CD8-positive, alpha-beta T cell (primary cell): ENCODE measurements at regions of chr12 and their contacts with region 1.

Region 1: GRCh38 chr12:12562585-12563261 is at the start of gene DUSP16:
- DNase-seq: peak; percentile 50 to 95 (median 75)
- ATAC-seq: peak; percentile 65
- H3K4me3 ChIP-seq: peak within 1 kb of the TSS; percentile 77 to 80
- H3K4me3 Mint-ChIP-seq: peak within 1 kb of the TSS; percentile 95
- H3K27ac ChIP-seq: peak within 1 kb of the TSS; percentile 92 to 96
- H3K27ac Mint-ChIP-seq: peak within 1 kb of the TSS; percentile 99
- H3K4me1 ChIP-seq: peaks cover 16% of the 10 kb centered on the region
- H3K4me1 Mint-ChIP-seq: peaks cover 43% of the 10 kb centered on the region
- H3K27me3 ChIP-seq: no peaks in the 10 kb centered on the region
- H3K27me3 Mint-ChIP-seq: no peaks in the 10 kb centered on the region
- CTCF ChIP-seq: no peak
- total RNA-seq, gene DUSP16: 27.9 to 34.1 TPM

Region 2: DNA sequence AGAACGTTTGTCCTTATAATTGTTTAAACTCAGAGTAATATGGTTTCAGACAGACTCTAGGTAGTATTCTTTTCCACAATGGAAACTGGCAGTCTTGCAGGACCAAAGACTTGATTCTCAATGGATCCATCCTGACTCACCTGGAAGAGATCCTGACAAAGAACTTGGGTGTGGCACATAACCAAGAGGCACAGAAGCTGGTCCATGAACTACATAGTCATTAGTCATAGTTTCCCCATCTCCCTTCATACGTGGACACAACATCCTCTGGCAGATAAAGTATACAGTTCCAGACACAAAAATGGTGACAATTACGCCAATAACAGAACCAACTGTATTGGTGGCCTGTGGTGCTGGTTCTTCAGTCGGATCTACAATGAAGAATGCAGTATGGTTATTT is 436.2 kb before region 1 on chr12:
- CTCF ChIA-PET with region 1: no interaction called
- POLR2A ChIA-PET with region 1: no interaction called
- intact Hi-C with region 1: no loop called
- DNase-seq: no peak
- ATAC-seq: no peak
- H3K4me3 ChIP-seq: no peak overlapping the region
- H3K4me3 Mint-ChIP-seq: no peak overlapping the region
- H3K27ac ChIP-seq: no peak overlapping the region
- H3K27ac Mint-ChIP-seq: no peak overlapping the region
- H3K4me1 ChIP-seq: no peaks in the 10 kb centered on the region
- H3K4me1 Mint-ChIP-seq: no peaks in the 10 kb centered on the region
- H3K27me3 ChIP-seq: no peaks in the 10 kb centered on the region
- H3K27me3 Mint-ChIP-seq: no peaks in the 10 kb centered on the region
- CTCF ChIP-seq: no peak

Region 3: DNA sequence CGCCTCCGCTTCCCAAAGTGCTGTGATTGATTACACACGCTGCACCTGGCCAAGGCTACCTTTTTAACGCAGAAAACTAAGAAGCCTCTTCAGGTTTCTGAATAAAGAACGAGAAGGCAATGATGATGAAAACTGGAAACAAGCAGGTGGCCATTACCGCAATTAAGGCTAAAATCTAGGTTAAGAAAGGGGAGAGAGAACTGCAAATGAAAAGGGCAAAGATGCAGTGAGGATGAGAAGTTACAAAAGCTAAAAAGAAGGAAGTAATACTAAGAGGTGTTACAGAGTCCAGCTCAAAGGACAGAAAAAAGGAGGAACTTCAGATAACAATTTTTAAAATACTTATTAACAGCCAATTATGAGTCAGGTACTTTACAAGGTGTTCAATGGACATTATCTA is 79.8 kb before region 1 on chr12:
- CTCF ChIA-PET with region 1: no interaction called
- POLR2A ChIA-PET with region 1: interaction called, 4 read pairs
- intact Hi-C with region 1: loop called (anchors 1 kb)
- DNase-seq: no peak
- ATAC-seq: no peak
- H3K4me3 ChIP-seq: peak overlapping the region in 1 of 2 experiments; percentile 11
- H3K4me3 Mint-ChIP-seq: peak overlapping the region; percentile 47
- H3K27ac ChIP-seq: peak overlapping the region; percentile 73 to 83
- H3K27ac Mint-ChIP-seq: peak overlapping the region; percentile 99
- H3K4me1 ChIP-seq: peaks cover 28% of the 10 kb centered on the region
- H3K4me1 Mint-ChIP-seq: peaks cover 52% of the 10 kb centered on the region
- H3K27me3 ChIP-seq: no peaks in the 10 kb centered on the region
- H3K27me3 Mint-ChIP-seq: no peaks in the 10 kb centered on the region
- CTCF ChIP-seq: no peak

Region 4: DNA sequence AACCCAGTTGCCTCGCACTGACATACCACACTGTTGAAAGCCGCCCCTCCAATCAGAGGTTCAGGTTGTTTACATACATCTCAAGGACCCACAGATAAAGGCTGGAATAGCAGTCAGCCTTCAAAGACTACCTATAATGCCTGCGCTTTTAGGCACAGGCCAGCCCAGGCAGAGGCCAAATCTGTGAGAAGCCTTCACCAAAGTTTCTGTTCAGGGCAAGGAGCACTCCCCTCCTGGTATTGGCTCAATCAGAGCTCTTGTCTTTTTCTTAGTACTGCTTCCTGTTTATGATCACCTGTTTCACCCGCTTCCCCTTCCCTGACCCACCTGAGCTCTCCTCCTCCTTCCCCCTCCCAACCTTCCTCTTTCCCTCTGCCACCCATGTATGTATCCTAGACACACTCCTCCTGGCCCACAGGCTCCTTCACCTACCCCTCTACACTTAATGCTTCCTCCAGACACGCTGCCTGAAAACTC is 34.9 kb before region 1 on chr12:
- CTCF ChIA-PET with region 1: interaction called, 4 read pairs
- POLR2A ChIA-PET with region 1: no interaction called
- intact Hi-C with region 1: loop called in 1 of 2 experiments (anchors 5 kb)
- DNase-seq: peak in 2 of 9 experiments; percentile 33 to 55
- ATAC-seq: peak; percentile 61
- H3K4me3 ChIP-seq: no peak overlapping the region
- H3K4me3 Mint-ChIP-seq: peak overlapping the region; percentile 19
- H3K27ac ChIP-seq: peak overlapping the region in 1 of 2 experiments; percentile 42
- H3K27ac Mint-ChIP-seq: peak overlapping the region; percentile 90
- H3K4me1 ChIP-seq: peaks cover 18% of the 10 kb centered on the region
- H3K4me1 Mint-ChIP-seq: peaks cover 46% of the 10 kb centered on the region
- H3K27me3 ChIP-seq: no peaks in the 10 kb centered on the region
- H3K27me3 Mint-ChIP-seq: no peaks in the 10 kb centered on the region
- CTCF ChIP-seq: no peak

Region 5: GRCh38 chr12:12598864-12599263 is 36.1 kb after region 1 on chr12:
- CTCF ChIA-PET with region 1: no interaction called
- POLR2A ChIA-PET with region 1: no interaction called
- intact Hi-C with region 1: no loop called
- DNase-seq: no peak
- ATAC-seq: no peak
- H3K4me3 ChIP-seq: no peak overlapping the region
- H3K4me3 Mint-ChIP-seq: no peak overlapping the region
- H3K27ac ChIP-seq: no peak overlapping the region
- H3K27ac Mint-ChIP-seq: no peak overlapping the region
- H3K4me1 ChIP-seq: no peaks in the 10 kb centered on the region
- H3K4me1 Mint-ChIP-seq: no peaks in the 10 kb centered on the region
- H3K27me3 ChIP-seq: no peaks in the 10 kb centered on the region
- H3K27me3 Mint-ChIP-seq: no peaks in the 10 kb centered on the region
- CTCF ChIP-seq: no peak

Region 6: DNA sequence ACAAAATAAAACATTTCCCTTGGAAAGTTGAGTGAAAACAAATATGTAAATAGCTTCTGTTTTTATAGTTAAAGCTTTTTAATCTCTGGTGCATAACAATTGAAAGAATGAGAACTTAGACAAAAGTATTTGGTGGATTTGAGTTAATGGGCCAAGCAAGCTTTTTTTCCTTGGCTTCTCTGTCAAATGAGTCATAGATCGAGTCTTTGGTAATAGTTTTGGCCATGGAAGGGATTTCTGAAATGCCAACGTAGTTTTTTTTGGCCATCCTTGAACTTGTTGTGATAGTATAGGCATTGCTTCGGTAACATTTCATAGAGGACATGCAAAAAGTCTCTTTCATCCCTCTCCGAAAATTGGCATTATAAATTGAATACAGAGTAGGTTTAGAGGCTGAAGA is 98.4 kb after region 1 on chr12:
- CTCF ChIA-PET with region 1: interaction called, 12 read pairs
- POLR2A ChIA-PET with region 1: no interaction called
- intact Hi-C with region 1: loop called in 1 of 2 experiments (anchors 1 kb)
- DNase-seq: no peak
- ATAC-seq: no peak
- H3K4me3 ChIP-seq: no peak overlapping the region
- H3K4me3 Mint-ChIP-seq: no peak overlapping the region
- H3K27ac ChIP-seq: no peak overlapping the region
- H3K27ac Mint-ChIP-seq: no peak overlapping the region
- H3K4me1 ChIP-seq: no peaks in the 10 kb centered on the region
- H3K4me1 Mint-ChIP-seq: peaks cover under 1% of the 10 kb centered on the region
- H3K27me3 ChIP-seq: no peaks in the 10 kb centered on the region
- H3K27me3 Mint-ChIP-seq: no peaks in the 10 kb centered on the region
- CTCF ChIP-seq: no peak

Region 7: GRCh38 chr12:12724661-12725545 is 162.2 kb after region 1 on chr12:
- CTCF ChIA-PET with region 1: no interaction called
- POLR2A ChIA-PET with region 1: interaction called, 9 read pairs
- intact Hi-C with region 1: loop called in 1 of 2 experiments (anchors 1 kb)
- DNase-seq: peak in 8 of 9 experiments; percentile 82 to 98 (median 86)
- ATAC-seq: peak; percentile 57
- H3K4me3 ChIP-seq: peak overlapping the region; percentile 90 to 92
- H3K4me3 Mint-ChIP-seq: peak overlapping the region; percentile 82
- H3K27ac ChIP-seq: peak overlapping the region; percentile 93 to 97
- H3K27ac Mint-ChIP-seq: peak overlapping the region; percentile 99
- H3K4me1 ChIP-seq: peaks cover 51% of the 10 kb centered on the region
- H3K4me1 Mint-ChIP-seq: peaks cover 52% of the 10 kb centered on the region
- H3K27me3 ChIP-seq: no peaks in the 10 kb centered on the region
- H3K27me3 Mint-ChIP-seq: no peaks in the 10 kb centered on the region
- CTCF ChIP-seq: no peak